Esophagus squamous epithelium (tissue), 5 donors: ENCODE measurements at regions of chr17 and their contacts with region 1.

Region 1: GRCh38 chr17:77248216-77249114 is 107.7 kb downstream of the SEC14L1 start:
- DNase-seq: no peak
- H3K4me3 ChIP-seq: no peak overlapping the region
- H3K27ac ChIP-seq: no peak overlapping the region
- H3K4me1 ChIP-seq: peaks cover 3 to 15% (median 12%) of the 10 kb centered on the region in 3 donors
- H3K27me3 ChIP-seq: peaks cover 0 to 17% (median 0%) of the 10 kb centered on the region in 4 donors
- CTCF ChIP-seq: no peak
- POLR2A ChIP-seq: no peak

Region 2: GRCh38 chr17:77086433-77087010 is 161.9 kb before region 1 on chr17:
- intact Hi-C with region 1: loop called (anchors 2 kb)
- DNase-seq: peak; percentile 19
- H3K4me3 ChIP-seq: peak overlapping the region in 1 of 4 donors; percentile 28
- H3K27ac ChIP-seq: peak overlapping the region in 1 of 4 donors; percentile 2
- H3K4me1 ChIP-seq: peaks cover 9 to 47% (median 22%) of the 10 kb centered on the region in 3 donors
- H3K27me3 ChIP-seq: peaks cover 0 to 13% (median 0%) of the 10 kb centered on the region in 4 donors
- CTCF ChIP-seq: peak; percentile 88 to 95 (median 91)
- POLR2A ChIP-seq: no peak

Region 3: DNA sequence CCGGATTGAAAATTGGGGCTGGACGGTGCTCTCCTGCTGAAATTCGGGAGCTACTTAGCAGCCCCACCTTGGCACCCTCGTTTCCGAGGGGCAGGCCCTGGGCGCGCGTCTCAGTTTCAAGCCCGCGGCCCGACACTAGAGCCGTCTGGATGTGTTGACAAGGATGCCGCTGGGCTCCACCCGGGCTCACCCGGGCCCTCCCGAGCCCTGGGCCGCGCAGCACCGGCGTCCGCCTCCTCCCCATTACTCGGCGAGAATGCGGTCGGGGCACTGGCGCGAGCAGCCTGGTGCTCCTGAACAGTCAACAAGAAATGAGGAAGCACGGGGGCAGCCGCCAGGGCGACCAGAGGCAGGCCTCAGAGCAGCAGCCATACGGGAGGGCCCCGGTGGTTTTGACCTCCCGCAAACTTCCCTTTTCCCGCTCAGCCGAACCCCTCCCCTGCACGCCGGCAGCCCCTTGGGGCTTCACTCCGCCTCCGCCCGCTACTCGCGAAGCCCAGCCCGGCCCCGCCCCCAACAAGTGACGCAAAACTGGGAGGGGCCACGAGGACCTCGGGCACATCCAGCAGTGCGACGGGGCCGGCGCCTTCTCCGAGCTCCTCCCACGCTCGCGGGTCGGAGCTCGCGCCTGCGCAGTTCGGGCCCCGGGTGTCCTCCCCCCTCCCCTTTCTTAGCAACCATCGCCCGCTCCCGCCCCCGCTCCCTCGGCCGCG is 108.1 kb before region 1 on chr17:
- intact Hi-C with region 1: no loop called
- DNase-seq: peak; percentile 90
- H3K4me3 ChIP-seq: peak overlapping the region; percentile 64 to 98 (median 96)
- H3K27ac ChIP-seq: peak overlapping the region; percentile 93 to 98 (median 98)
- H3K4me1 ChIP-seq: peaks cover 9 to 66% (median 13%) of the 10 kb centered on the region in 3 donors
- H3K27me3 ChIP-seq: no peaks in the 10 kb centered on the region
- CTCF ChIP-seq: peak in 1 of 6 experiments; percentile 38
- POLR2A ChIP-seq: peak in 3 of 4 donors; percentile 96 to 99 (median 98)

Region 4: GRCh38 chr17:77372444-77373298 is 124.2 kb after region 1 on chr17:
- intact Hi-C with region 1: no loop called
- DNase-seq: no peak
- H3K4me3 ChIP-seq: peak overlapping the region; percentile 53 to 82 (median 74)
- H3K27ac ChIP-seq: peak overlapping the region; percentile 83 to 96 (median 93)
- H3K4me1 ChIP-seq: peaks cover 55 to 95% (median 55%) of the 10 kb centered on the region in 3 donors
- H3K27me3 ChIP-seq: no peaks in the 10 kb centered on the region
- CTCF ChIP-seq: no peak
- POLR2A ChIP-seq: peak in 1 of 4 donors; percentile 11